OCI-LY7 (cell line): ENCODE measurements at regions of chr6 and their contacts with region 1.

Region 1: DNA sequence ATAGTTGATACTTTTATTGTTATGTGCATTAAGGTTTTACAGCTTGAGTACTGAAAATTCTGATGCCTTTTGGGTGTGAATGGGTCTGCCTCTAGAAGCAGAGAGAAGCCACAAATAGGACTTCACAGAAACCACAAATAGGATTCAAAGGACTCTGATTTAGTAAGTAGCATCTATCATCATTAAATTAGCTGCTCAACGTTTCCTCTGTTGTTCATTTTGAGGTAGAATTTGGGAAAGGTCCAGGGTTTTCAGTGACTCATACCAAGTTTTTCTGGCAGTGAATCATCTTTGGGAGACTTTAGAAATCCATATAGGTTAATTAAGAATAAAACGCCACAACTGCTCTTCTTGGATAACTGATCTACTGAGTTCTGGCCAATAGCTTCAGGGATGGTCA is 105.1 kb downstream of the PHF3 start:
- DNase-seq: no peak
- H3K4me3 ChIP-seq: no peak overlapping the region
- H3K27ac ChIP-seq: no peak overlapping the region
- H3K4me1 ChIP-seq: no peaks in the 10 kb centered on the region
- CTCF ChIP-seq: no peak

Region 2: GRCh38 chr6:62652692-62653328 is 1087.9 kb before region 1 on chr6:
- CTCF ChIA-PET with region 1: no interaction called
- POLR2A ChIA-PET with region 1: no interaction called
- intact Hi-C with region 1: loop called (anchors 10 kb)
- DNase-seq: peak; percentile 45
- H3K4me3 ChIP-seq: no peak overlapping the region
- H3K27ac ChIP-seq: no peak overlapping the region
- H3K4me1 ChIP-seq: no peaks in the 10 kb centered on the region
- CTCF ChIP-seq: no peak

Region 3: DNA sequence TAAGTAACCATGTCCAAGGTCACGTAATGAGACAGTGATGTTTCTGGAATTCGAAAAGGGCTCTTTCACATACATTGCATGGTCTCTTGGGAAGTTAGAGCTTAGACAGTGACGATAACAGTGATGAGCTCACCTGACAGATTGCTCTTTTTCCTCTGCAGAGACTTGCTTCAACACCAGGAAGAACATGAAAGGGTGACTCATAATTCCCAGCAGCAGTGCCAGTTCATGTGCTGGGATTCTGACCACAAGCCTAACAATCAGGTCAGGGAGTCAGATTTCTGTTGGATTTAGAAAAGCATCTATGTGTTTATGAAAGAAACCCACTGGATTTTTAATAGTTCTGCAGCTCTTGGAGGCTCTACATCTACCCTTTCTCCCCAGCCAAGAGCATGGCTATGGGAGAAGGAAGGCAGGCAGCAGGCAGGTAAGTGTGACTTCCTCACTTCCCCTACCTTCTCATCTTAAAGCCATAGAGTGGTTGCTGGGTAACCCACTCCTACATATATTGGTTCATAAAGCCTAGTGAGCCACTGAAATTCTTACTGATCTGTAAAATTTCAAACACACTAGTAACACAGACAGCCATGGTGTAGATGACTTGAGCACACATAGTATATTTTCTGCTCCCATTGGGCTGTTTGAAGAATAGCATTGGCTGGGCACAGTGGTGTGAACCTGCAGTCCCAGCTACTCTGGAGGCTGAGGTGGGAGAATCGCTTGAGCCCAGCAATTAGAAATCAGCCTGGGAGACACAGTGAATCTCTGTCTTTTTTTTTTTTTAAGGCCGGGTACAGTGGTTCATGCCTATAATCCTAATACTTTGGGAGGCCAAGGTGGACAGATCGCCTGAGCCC is 212.8 kb before region 1 on chr6:
- CTCF ChIA-PET with region 1: no interaction called
- POLR2A ChIA-PET with region 1: no interaction called
- intact Hi-C with region 1: no loop called
- DNase-seq: no peak
- H3K4me3 ChIP-seq: no peak overlapping the region
- H3K27ac ChIP-seq: no peak overlapping the region
- H3K4me1 ChIP-seq: peaks cover 19% of the 10 kb centered on the region
- CTCF ChIP-seq: no peak

Region 4: DNA sequence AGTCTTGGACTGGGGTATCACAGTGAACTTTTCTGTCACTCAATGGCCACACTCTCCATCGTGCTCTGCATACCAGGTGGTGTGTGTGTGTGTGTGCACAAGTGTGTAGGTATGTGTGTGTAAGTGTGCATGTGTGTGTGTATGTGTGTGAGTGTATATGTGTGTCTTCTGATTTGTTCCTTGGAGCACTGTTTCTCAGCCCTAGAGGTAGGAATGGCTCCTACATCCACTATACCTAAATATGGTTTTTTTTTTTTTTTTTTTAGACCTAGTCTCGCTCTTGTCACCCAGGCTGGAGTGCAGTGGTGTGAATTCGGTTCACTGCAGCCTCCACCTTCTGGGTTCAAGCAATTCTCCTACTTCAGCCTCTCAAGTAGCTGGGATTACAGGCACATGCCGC is 131.5 kb after region 1 on chr6:
- CTCF ChIA-PET with region 1: no interaction called
- POLR2A ChIA-PET with region 1: no interaction called
- intact Hi-C with region 1: no loop called
- DNase-seq: no peak
- H3K4me3 ChIP-seq: no peak overlapping the region
- H3K27ac ChIP-seq: no peak overlapping the region
- H3K4me1 ChIP-seq: no peaks in the 10 kb centered on the region
- CTCF ChIP-seq: no peak